Naive thymus-derived CD4-positive, alpha-beta T cell (primary cell): ENCODE measurements at regions of chr9 and their contacts with region 1.

Region 1: GRCh38 chr9:73149371-73150067 is 2.1 kb upstream of the ANXA1 start:
- DNase-seq: peak in 1 of 9 donors; percentile 57
- ATAC-seq: peak; percentile 49
- H3K4me3 ChIP-seq: peak overlapping the region; percentile 17
- H3K4me3 Mint-ChIP-seq: peak overlapping the region in 9 of 10 donors; percentile 8 to 79 (median 60)
- H3K27ac ChIP-seq: peak overlapping the region; percentile 32
- H3K27ac Mint-ChIP-seq: peak overlapping the region; percentile 71 to 96 (median 78)
- H3K4me1 ChIP-seq: peaks cover 28 to 32% of the 10 kb centered on the region in 2 donors
- H3K4me1 Mint-ChIP-seq: peaks cover 34 to 80% (median 54%) of the 10 kb centered on the region in 7 donors
- H3K27me3 ChIP-seq: no peaks in the 10 kb centered on the region
- H3K27me3 Mint-ChIP-seq: peaks cover 0 to 2% (median 0%) of the 10 kb centered on the region in 5 donors

Region 2: GRCh38 chr9:72856972-72857623 is 292.4 kb before region 1 on chr9:
- CTCF ChIA-PET with region 1: no interaction called
- POLR2A ChIA-PET with region 1: no interaction called
- intact Hi-C with region 1: no loop called
- DNase-seq: peak in 1 of 9 donors; percentile 4
- ATAC-seq: peak; percentile 45
- H3K4me3 ChIP-seq: no peak overlapping the region
- H3K4me3 Mint-ChIP-seq: no peak overlapping the region
- H3K27ac ChIP-seq: no peak overlapping the region
- H3K27ac Mint-ChIP-seq: no peak overlapping the region
- H3K4me1 ChIP-seq: no peaks in the 10 kb centered on the region
- H3K4me1 Mint-ChIP-seq: peaks cover 0 to 5% (median 0%) of the 10 kb centered on the region in 7 donors
- H3K27me3 ChIP-seq: no peaks in the 10 kb centered on the region
- H3K27me3 Mint-ChIP-seq: peaks cover 0 to 5% (median 0%) of the 10 kb centered on the region in 5 donors

Region 3: GRCh38 chr9:72997387-72997995 is 152.0 kb before region 1 on chr9:
- CTCF ChIA-PET with region 1: no interaction called
- POLR2A ChIA-PET with region 1: no interaction called
- intact Hi-C with region 1: no loop called
- DNase-seq: no peak
- ATAC-seq: peak; percentile 26
- H3K4me3 ChIP-seq: no peak overlapping the region
- H3K4me3 Mint-ChIP-seq: peak overlapping the region in 3 of 10 donors; percentile 1 to 10 (median 3)
- H3K27ac ChIP-seq: no peak overlapping the region
- H3K27ac Mint-ChIP-seq: no peak overlapping the region
- H3K4me1 ChIP-seq: no peaks in the 10 kb centered on the region
- H3K4me1 Mint-ChIP-seq: peaks cover 0 to 7% (median 4%) of the 10 kb centered on the region in 7 donors
- H3K27me3 ChIP-seq: no peaks in the 10 kb centered on the region
- H3K27me3 Mint-ChIP-seq: peaks cover 0 to 24% (median 7%) of the 10 kb centered on the region in 5 donors

Region 4: GRCh38 chr9:73104342-73104741 is 45.2 kb before region 1 on chr9:
- CTCF ChIA-PET with region 1: interaction called, 7 read pairs
- POLR2A ChIA-PET with region 1: no interaction called
- intact Hi-C with region 1: loop called in 1 of 2 experiments (anchors 1 kb)
- DNase-seq: no peak
- ATAC-seq: peak; percentile 37
- H3K4me3 ChIP-seq: no peak overlapping the region
- H3K4me3 Mint-ChIP-seq: no peak overlapping the region
- H3K27ac ChIP-seq: no peak overlapping the region
- H3K27ac Mint-ChIP-seq: no peak overlapping the region
- H3K4me1 ChIP-seq: no peaks in the 10 kb centered on the region
- H3K4me1 Mint-ChIP-seq: peaks cover 0 to 3% (median 0%) of the 10 kb centered on the region in 7 donors
- H3K27me3 ChIP-seq: no peaks in the 10 kb centered on the region
- H3K27me3 Mint-ChIP-seq: peaks cover 0 to 23% (median 0%) of the 10 kb centered on the region in 5 donors

Region 5: GRCh38 chr9:73116031-73116430 is 33.5 kb before region 1 on chr9:
- CTCF ChIA-PET with region 1: interaction called, 3 read pairs
- POLR2A ChIA-PET with region 1: interaction called, 4 read pairs
- intact Hi-C with region 1: loop called in 1 of 2 experiments (anchors 2 kb)
- DNase-seq: no peak
- ATAC-seq: no peak
- H3K4me3 ChIP-seq: no peak overlapping the region
- H3K4me3 Mint-ChIP-seq: no peak overlapping the region
- H3K27ac ChIP-seq: no peak overlapping the region
- H3K27ac Mint-ChIP-seq: no peak overlapping the region
- H3K4me1 ChIP-seq: peaks cover 0 to 19% of the 10 kb centered on the region in 2 donors
- H3K4me1 Mint-ChIP-seq: peaks cover 19 to 48% (median 38%) of the 10 kb centered on the region in 7 donors
- H3K27me3 ChIP-seq: no peaks in the 10 kb centered on the region
- H3K27me3 Mint-ChIP-seq: no peaks in the 10 kb centered on the region

Region 6: GRCh38 chr9:73162987-73163768 is 13.7 kb after region 1 on chr9:
- CTCF ChIA-PET with region 1: no interaction called
- POLR2A ChIA-PET with region 1: no interaction called
- intact Hi-C with region 1: loop called (anchors 1 kb)
- DNase-seq: no peak
- ATAC-seq: peak; percentile 33
- H3K4me3 ChIP-seq: no peak overlapping the region
- H3K4me3 Mint-ChIP-seq: no peak overlapping the region
- H3K27ac ChIP-seq: no peak overlapping the region
- H3K27ac Mint-ChIP-seq: peak overlapping the region in 8 of 9 donors; percentile 21 to 83 (median 70)
- H3K4me1 ChIP-seq: peaks cover 11 to 15% of the 10 kb centered on the region in 2 donors
- H3K4me1 Mint-ChIP-seq: peaks cover 15 to 67% (median 49%) of the 10 kb centered on the region in 7 donors
- H3K27me3 ChIP-seq: no peaks in the 10 kb centered on the region
- H3K27me3 Mint-ChIP-seq: no peaks in the 10 kb centered on the region

Region 7: DNA sequence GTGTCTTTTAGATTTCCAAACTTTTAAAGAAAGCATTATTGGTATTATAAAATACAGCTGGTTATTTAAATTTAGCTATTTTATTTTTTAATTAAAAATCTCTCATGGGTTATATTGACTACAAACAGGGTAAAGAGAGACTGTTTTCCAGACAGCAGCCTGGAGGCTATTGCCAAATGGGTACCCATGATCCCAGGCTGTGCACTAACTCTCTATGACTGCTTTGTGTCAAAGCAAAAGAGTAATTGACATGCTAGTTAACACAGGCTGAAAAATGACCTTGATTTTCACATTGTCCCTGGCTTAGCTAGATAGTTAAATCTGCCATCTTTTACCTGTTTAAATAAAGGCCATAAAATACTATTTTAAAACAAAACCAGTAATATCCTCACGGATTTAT is 591.8 kb after region 1 on chr9:
- CTCF ChIA-PET with region 1: no interaction called
- POLR2A ChIA-PET with region 1: no interaction called
- intact Hi-C with region 1: no loop called
- DNase-seq: no peak
- ATAC-seq: no peak
- H3K4me3 ChIP-seq: no peak overlapping the region
- H3K4me3 Mint-ChIP-seq: no peak overlapping the region
- H3K27ac ChIP-seq: no peak overlapping the region
- H3K27ac Mint-ChIP-seq: no peak overlapping the region
- H3K4me1 ChIP-seq: no peaks in the 10 kb centered on the region
- H3K4me1 Mint-ChIP-seq: no peaks in the 10 kb centered on the region
- H3K27me3 ChIP-seq: no peaks in the 10 kb centered on the region
- H3K27me3 Mint-ChIP-seq: no peaks in the 10 kb centered on the region

Region 8: GRCh38 chr9:74277532-74277931 is 1128.0 kb after region 1 on chr9:
- CTCF ChIA-PET with region 1: no interaction called
- POLR2A ChIA-PET with region 1: no interaction called
- intact Hi-C with region 1: loop called in 1 of 2 experiments (anchors 10 kb)
- DNase-seq: peak in 2 of 9 donors; percentile 4 to 50
- ATAC-seq: no peak
- H3K4me3 ChIP-seq: no peak overlapping the region
- H3K4me3 Mint-ChIP-seq: peak overlapping the region in 2 of 10 donors; percentile 47 to 56
- H3K27ac ChIP-seq: no peak overlapping the region
- H3K27ac Mint-ChIP-seq: peak overlapping the region in 1 of 9 donors; percentile 35
- H3K4me1 ChIP-seq: no peaks in the 10 kb centered on the region
- H3K4me1 Mint-ChIP-seq: peaks cover 0 to 21% (median 0%) of the 10 kb centered on the region in 7 donors
- H3K27me3 ChIP-seq: no peaks in the 10 kb centered on the region
- H3K27me3 Mint-ChIP-seq: peaks cover 0 to under 1% (median 0%) of the 10 kb centered on the region in 5 donors